ENCODE measurements at regions of chr16 and their contacts with region 1.

Region 1: DNA sequence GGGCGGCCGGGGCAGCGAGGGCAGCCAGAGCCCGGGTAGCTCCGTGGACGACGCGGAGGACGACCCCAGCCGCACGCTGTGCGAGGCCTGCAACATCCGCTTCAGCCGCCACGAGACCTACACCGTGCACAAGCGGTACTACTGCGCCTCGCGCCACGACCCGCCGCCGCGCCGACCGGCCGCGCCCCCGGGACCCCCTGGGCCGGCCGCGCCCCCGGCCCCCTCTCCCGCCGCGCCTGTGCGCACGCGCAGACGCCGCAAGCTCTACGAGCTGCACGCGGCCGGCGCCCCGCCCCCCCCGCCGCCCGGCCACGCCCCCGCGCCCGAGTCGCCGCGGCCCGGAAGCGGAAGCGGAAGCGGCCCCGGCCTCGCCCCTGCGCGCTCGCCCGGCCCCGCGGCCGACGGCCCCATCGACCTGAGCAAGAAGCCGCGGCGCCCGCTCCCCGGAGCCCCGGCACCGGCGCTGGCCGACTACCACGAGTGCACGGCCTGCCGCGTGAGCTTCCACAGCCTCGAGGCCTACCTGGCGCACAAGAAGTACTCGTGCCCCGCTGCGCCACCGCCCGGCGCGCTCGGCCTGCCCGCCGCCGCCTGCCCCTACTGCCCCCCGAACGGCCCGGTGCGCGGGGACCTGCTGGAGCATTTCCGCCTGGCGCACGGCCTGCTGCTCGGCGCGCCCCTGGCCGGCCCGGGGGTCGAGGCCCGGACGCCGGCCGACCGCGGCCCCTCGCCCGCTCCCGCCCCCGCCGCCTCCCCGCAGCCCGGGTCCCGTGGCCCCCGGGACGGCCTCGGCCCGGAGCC is 36.1 kb upstream of the ZC3H18 start:
- DNase-seq: peak; percentile 65
- H3K4me3 ChIP-seq: peak overlapping the region; percentile 60 to 75
- H3K27ac ChIP-seq: peak overlapping the region in 1 of 2 donors; percentile 56
- H3K4me1 ChIP-seq: peaks cover 4% of the 10 kb centered on the region
- H3K27me3 ChIP-seq: peaks cover 7% of the 10 kb centered on the region
- CTCF ChIP-seq: peak in 2 of 4 experiments; percentile 14 to 32
- POLR2A ChIP-seq: peak; percentile 28

Region 2: GRCh38 chr16:87950765-87951549 is 583.2 kb before region 1 on chr16 and contains the start of gene BANP:
- intact Hi-C with region 1: loop called (anchors 10 kb)
- DNase-seq: peak; percentile 98
- H3K4me3 ChIP-seq: peak within 1 kb of the TSS; percentile 87 to 93
- H3K27ac ChIP-seq: peak within 1 kb of the TSS; percentile 93 to 97
- H3K4me1 ChIP-seq: peaks cover 7% of the 10 kb centered on the region
- H3K27me3 ChIP-seq: no peaks in the 10 kb centered on the region
- CTCF ChIP-seq: peak in 2 of 4 experiments; percentile 50 to 51
- POLR2A ChIP-seq: peak; percentile 90
- total RNA-seq, gene BANP: 32.2 to 47.3 TPM

Region 3: GRCh38 chr16:88393034-88393433 is 141.1 kb before region 1 on chr16:
- intact Hi-C with region 1: no loop called
- DNase-seq: no peak
- H3K4me3 ChIP-seq: no peak overlapping the region
- H3K27ac ChIP-seq: no peak overlapping the region
- H3K4me1 ChIP-seq: peaks cover 2% of the 10 kb centered on the region
- H3K27me3 ChIP-seq: no peaks in the 10 kb centered on the region
- CTCF ChIP-seq: no peak
- POLR2A ChIP-seq: no peak

Region 4: GRCh38 chr16:88790312-88791211 is 256.4 kb after region 1 on chr16:
- intact Hi-C with region 1: no loop called
- DNase-seq: no peak
- H3K4me3 ChIP-seq: no peak overlapping the region
- H3K27ac ChIP-seq: no peak overlapping the region
- H3K4me1 ChIP-seq: no peaks in the 10 kb centered on the region
- H3K27me3 ChIP-seq: no peaks in the 10 kb centered on the region
- CTCF ChIP-seq: no peak
- POLR2A ChIP-seq: no peak